ENCODE measurements at regions of chr9 and their contacts with region 1.

Region 1: GRCh38 chr9:385818-386398 is 171.2 kb downstream of the DOCK8 start:
- DNase-seq: peak; percentile 76
- H3K4me3 ChIP-seq: no peak overlapping the region
- H3K27ac ChIP-seq: no peak overlapping the region
- H3K4me1 ChIP-seq: no peaks in the 10 kb centered on the region
- H3K27me3 ChIP-seq: no peaks in the 10 kb centered on the region
- CTCF ChIP-seq: peak; percentile 73 to 79
- POLR2A ChIP-seq: no peak

Region 2: DNA sequence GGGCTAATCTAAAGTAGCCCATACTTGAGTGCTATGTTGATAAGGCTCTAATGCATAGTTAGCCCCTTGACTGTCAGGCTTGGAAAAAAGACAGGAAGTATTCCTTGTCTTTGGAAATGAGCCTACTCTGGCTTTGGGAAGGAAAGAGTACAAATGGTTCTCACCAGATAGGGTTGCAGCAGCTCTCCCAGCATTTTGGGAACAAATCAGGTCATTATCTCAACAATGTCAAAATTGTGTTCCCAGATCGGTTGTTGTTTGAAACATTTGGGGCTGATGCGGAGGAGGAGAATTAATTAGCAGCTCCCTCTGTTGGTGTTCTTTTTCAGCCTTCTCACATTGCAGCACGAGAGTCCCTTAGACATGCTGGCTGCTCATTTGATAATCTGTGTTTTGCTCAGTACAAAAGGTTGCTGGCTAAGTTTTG is 160.9 kb after region 1 on chr9:
- CTCF ChIA-PET with region 1: no interaction called
- POLR2A ChIA-PET with region 1: no interaction called
- dilution Hi-C with region 1: no loop called
- intact Hi-C with region 1: loop called (anchors 1 kb)
- DNase-seq: peak; percentile 27
- H3K4me3 ChIP-seq: no peak overlapping the region
- H3K27ac ChIP-seq: no peak overlapping the region
- H3K4me1 ChIP-seq: no peaks in the 10 kb centered on the region
- H3K27me3 ChIP-seq: no peaks in the 10 kb centered on the region
- CTCF ChIP-seq: peak in 1 of 2 donors; percentile 15
- POLR2A ChIP-seq: no peak

Region 3: GRCh38 chr9:589723-590122 is 203.8 kb after region 1 on chr9:
- CTCF ChIA-PET with region 1: no interaction called
- POLR2A ChIA-PET with region 1: no interaction called
- dilution Hi-C with region 1: no loop called
- intact Hi-C with region 1: loop called (anchors 5 kb)
- DNase-seq: peak; percentile 45
- H3K4me3 ChIP-seq: no peak overlapping the region
- H3K27ac ChIP-seq: no peak overlapping the region
- H3K4me1 ChIP-seq: peaks cover 7% of the 10 kb centered on the region
- H3K27me3 ChIP-seq: peaks cover 0 to 2% of the 10 kb centered on the region in 2 experiments
- CTCF ChIP-seq: no peak
- POLR2A ChIP-seq: no peak

Region 4: DNA sequence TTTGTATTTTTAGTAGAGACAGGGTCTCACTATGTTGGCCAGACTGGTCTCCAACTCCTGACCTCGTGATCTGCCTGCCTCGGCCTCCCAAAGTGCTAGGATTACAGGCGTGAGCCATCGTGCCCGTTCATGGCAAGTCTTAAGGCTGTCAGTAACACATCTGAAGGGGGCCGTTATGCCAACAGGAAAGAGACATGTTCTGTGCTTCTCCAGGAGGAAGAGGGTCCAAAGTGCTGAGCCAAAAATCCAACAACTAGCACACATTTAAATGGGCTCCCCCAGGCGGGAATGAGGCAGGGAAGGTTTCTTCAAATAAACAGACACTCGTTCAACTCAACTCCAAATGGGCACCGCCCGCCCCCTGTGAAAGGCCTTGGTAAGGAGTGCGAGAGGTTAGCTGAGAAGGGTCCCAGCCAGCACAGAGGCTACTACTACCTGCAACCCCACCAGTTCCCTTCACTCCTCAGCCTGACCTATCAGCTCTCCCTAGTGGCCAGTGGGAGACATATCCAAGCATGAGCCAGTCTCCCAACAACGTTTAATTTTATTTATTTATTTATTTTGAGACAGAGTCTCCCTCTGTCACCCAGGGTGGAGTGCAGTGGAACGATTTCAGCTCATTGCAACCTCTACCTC is 371.5 kb after region 1 on chr9:
- CTCF ChIA-PET with region 1: interaction called, 3 read pairs
- POLR2A ChIA-PET with region 1: no interaction called
- dilution Hi-C with region 1: no loop called
- intact Hi-C with region 1: loop called (anchors 2 kb)
- DNase-seq: peak; percentile 67
- H3K4me3 ChIP-seq: no peak overlapping the region
- H3K27ac ChIP-seq: no peak overlapping the region
- H3K4me1 ChIP-seq: peaks cover 24% of the 10 kb centered on the region
- H3K27me3 ChIP-seq: no peaks in the 10 kb centered on the region
- CTCF ChIP-seq: peak; percentile 42 to 66
- POLR2A ChIP-seq: no peak

Region 5: DNA sequence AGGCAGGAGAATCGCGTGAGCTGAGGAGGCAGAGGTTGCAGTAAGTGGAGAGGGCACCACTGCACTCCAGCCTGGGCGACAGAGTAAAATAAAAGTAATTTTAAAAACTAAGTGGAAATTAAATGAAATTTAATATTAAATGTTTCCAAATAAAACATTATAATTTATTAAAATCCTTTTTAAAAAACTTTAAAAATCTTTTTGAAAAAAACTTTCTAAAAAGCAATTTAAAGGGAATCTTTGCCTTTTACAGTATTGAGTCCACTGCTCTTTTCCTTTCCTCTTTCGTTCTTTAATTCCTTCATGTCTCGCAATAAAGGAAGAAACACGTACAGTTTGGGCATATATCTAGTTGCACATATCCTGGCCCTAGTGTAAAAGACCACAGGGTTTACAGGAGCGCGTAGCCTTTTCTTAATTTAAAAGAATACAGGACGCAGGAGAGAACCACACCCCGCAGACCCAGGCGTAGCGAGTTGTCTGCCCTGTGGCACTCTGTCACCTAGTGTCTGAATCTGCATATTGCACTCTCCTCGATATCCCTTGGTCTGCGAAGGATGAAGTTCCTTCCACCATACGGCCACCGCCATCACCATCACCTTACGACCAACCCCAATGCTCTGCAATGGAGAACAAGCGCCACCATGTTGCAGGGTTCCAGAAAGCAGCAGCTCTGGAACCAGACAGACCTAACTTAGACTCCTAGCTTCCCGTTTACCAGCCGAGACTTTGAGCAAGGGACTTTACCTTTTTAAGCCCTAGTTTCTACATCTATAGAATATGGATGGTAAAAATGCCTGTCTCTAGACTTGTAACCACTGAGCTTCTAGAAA is 378.0 kb after region 1 on chr9:
- CTCF ChIA-PET with region 1: no interaction called
- POLR2A ChIA-PET with region 1: no interaction called
- dilution Hi-C with region 1: no loop called
- intact Hi-C with region 1: loop called (anchors 2 kb)
- DNase-seq: peak; percentile 90
- H3K4me3 ChIP-seq: peak overlapping the region in 1 of 3 experiments; percentile 20
- H3K27ac ChIP-seq: no peak overlapping the region
- H3K4me1 ChIP-seq: peaks cover 2% of the 10 kb centered on the region
- H3K27me3 ChIP-seq: peaks cover 3% of the 10 kb centered on the region in 2 experiments
- CTCF ChIP-seq: peak; percentile 90 to 96
- POLR2A ChIP-seq: no peak